Activated B cell treated with CpG ODN at 0.5 μM for 24 hours (primary cell): ENCODE measurements at regions of chr4 and their contacts with region 1.

Region 1: GRCh38 chr4:10582059-10582686 is 102.4 kb downstream of the CLNK start:
- DNase-seq: no peak
- ATAC-seq: no peak
- H3K4me3 Mint-ChIP-seq: no peak overlapping the region
- H3K27ac Mint-ChIP-seq: no peak overlapping the region
- H3K4me1 Mint-ChIP-seq: peaks cover 25% of the 10 kb centered on the region
- H3K27me3 Mint-ChIP-seq: no peaks in the 10 kb centered on the region
- CTCF ChIP-seq: no peak

Region 2: GRCh38 chr4:10688022-10688421 is 105.8 kb after region 1 on chr4:
- CTCF ChIA-PET with region 1: no interaction called
- POLR2A ChIA-PET with region 1: no interaction called
- intact Hi-C with region 1: no loop called
- DNase-seq: no peak
- ATAC-seq: no peak
- H3K4me3 Mint-ChIP-seq: peak overlapping the region; percentile 41
- H3K27ac Mint-ChIP-seq: no peak overlapping the region
- H3K4me1 Mint-ChIP-seq: peaks cover 64% of the 10 kb centered on the region
- H3K27me3 Mint-ChIP-seq: no peaks in the 10 kb centered on the region
- CTCF ChIP-seq: no peak

Region 3: GRCh38 chr4:11623726-11624037 is 1041.5 kb after region 1 on chr4:
- CTCF ChIA-PET with region 1: no interaction called
- POLR2A ChIA-PET with region 1: no interaction called
- intact Hi-C with region 1: loop called (anchors 1 kb)
- DNase-seq: no peak
- ATAC-seq: no peak
- H3K4me3 Mint-ChIP-seq: no peak overlapping the region
- H3K27ac Mint-ChIP-seq: no peak overlapping the region
- H3K4me1 Mint-ChIP-seq: peaks cover 4% of the 10 kb centered on the region
- H3K27me3 Mint-ChIP-seq: no peaks in the 10 kb centered on the region
- CTCF ChIP-seq: no peak

Region 4: GRCh38 chr4:11765849-11766453 is 1183.8 kb after region 1 on chr4:
- CTCF ChIA-PET with region 1: interaction called, 7 read pairs
- POLR2A ChIA-PET with region 1: no interaction called
- intact Hi-C with region 1: loop called (anchors 1 kb)
- DNase-seq: no peak
- ATAC-seq: no peak
- H3K4me3 Mint-ChIP-seq: no peak overlapping the region
- H3K27ac Mint-ChIP-seq: no peak overlapping the region
- H3K4me1 Mint-ChIP-seq: no peaks in the 10 kb centered on the region
- H3K27me3 Mint-ChIP-seq: peaks cover 3% of the 10 kb centered on the region
- CTCF ChIP-seq: peak; percentile 56

Region 5: GRCh38 chr4:11954093-11954492 is 1371.9 kb after region 1 on chr4:
- CTCF ChIA-PET with region 1: no interaction called
- POLR2A ChIA-PET with region 1: no interaction called
- intact Hi-C with region 1: loop called (anchors 2 kb)
- DNase-seq: no peak
- ATAC-seq: no peak
- H3K4me3 Mint-ChIP-seq: no peak overlapping the region
- H3K27ac Mint-ChIP-seq: no peak overlapping the region
- H3K4me1 Mint-ChIP-seq: no peaks in the 10 kb centered on the region
- H3K27me3 Mint-ChIP-seq: no peaks in the 10 kb centered on the region
- CTCF ChIP-seq: no peak